Transverse colon (tissue), 4 donors: ENCODE measurements at regions of chr16 and their contacts with region 1.

Region 1: DNA sequence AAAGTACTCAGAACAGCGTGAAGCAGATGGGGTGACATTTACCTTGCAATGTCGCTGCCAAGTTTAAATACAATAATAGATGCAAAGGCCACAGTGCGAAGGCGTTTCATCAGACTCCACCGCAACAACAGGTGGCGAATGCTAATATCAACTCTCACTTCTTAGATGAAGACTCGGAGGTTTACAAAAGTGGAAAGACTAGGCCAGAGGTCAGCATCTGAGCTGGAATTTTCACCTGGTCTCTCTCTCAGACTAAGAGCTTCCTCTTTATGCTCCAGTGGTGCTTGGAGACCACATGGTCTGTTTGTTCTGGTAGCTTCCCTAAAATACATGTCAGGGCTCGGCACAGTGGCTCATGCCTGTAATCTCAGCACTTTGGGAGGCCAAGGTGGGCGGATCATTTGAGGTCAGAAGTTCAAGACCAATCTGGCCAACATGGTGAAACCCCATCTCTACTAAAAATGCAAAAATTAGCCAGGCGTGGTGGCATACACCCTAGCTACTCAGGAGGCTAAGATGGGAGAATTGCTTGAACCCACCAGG is 169.1 kb downstream of the XYLT1 start:
- DNase-seq: peak; percentile 55
- H3K4me3 ChIP-seq: no peak overlapping the region
- H3K27ac ChIP-seq: peak overlapping the region; percentile 76 to 88 (median 86)
- H3K4me1 ChIP-seq: peaks cover 29 to 57% (median 46%) of the 10 kb centered on the region in 4 donors
- H3K27me3 ChIP-seq: no peaks in the 10 kb centered on the region
- CTCF ChIP-seq: no peak
- EP300 ChIP-seq: no peak
- POLR2A ChIP-seq: no peak

Region 2: DNA sequence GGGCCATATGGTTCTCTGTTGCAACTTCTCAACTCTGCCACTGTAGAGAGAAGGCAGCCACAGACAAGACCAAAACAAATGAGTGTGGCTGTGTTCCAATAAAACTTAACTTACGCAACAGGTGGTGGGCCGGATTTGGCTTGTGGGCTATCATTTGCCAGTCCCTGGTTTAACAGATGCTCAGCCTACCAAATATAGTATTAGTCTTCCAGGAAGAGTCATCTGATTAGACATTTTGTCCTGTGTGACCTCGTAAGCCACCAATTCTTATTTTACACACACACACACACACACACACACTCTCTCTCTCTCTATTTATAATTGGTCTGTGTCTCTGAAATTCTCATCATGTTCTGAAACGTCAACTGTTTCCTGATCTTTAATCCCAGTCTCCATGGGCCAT is 76.8 kb before region 1 on chr16:
- in situ Hi-C with region 1: no loop called
- intact Hi-C with region 1: loop called (anchors 5 kb)
- DNase-seq: peak; percentile 66
- H3K4me3 ChIP-seq: no peak overlapping the region
- H3K27ac ChIP-seq: peak overlapping the region; percentile 65 to 85 (median 70)
- H3K4me1 ChIP-seq: peaks cover 12 to 25% (median 19%) of the 10 kb centered on the region in 4 donors
- H3K27me3 ChIP-seq: no peaks in the 10 kb centered on the region
- CTCF ChIP-seq: no peak
- EP300 ChIP-seq: peak; percentile 55
- POLR2A ChIP-seq: no peak

Region 3: GRCh38 chr16:17237350-17237944 is 64.2 kb before region 1 on chr16:
- in situ Hi-C with region 1: no loop called
- intact Hi-C with region 1: no loop called
- DNase-seq: no peak
- H3K4me3 ChIP-seq: no peak overlapping the region
- H3K27ac ChIP-seq: no peak overlapping the region
- H3K4me1 ChIP-seq: no peaks in the 10 kb centered on the region
- H3K27me3 ChIP-seq: no peaks in the 10 kb centered on the region
- CTCF ChIP-seq: no peak
- EP300 ChIP-seq: no peak
- POLR2A ChIP-seq: no peak